HepG2 (cell line): ENCODE measurements at regions of chr3 and their contacts with region 1.

Region 1: GRCh38 chr3:188037216-188037718 is 116.7 kb upstream of the LPP start:
- DNase-seq: peak; percentile 83
- ATAC-seq: peak; percentile 83
- H3K4me3 ChIP-seq: peak overlapping the region in 2 of 3 experiments; percentile 14 to 56; a peak in 1 of 6 replicates
- H3K27ac ChIP-seq: peak overlapping the region; percentile 82
- H3K4me1 ChIP-seq: peaks cover 62% of the 10 kb centered on the region
- H3K27me3 ChIP-seq: no peaks in the 10 kb centered on the region
- CTCF ChIP-seq: peak; percentile 79
- EP300 ChIP-seq: peak in 1 of 2 experiments; percentile 42; a peak in 1 of 4 replicates
- POLR2A ChIP-seq: no peak
- RAD21 ChIP-seq: peak; percentile 80

Region 2: GRCh38 chr3:187738331-187739093 is 298.8 kb before region 1 on chr3:
- CTCF ChIA-PET with region 1: interaction called, 4 read pairs
- POLR2A ChIA-PET with region 1: interaction called, 11 read pairs
- in situ Hi-C with region 1: loop called (anchors 5 kb)
- intact Hi-C with region 1: no loop called
- DNase-seq: peak; percentile 72
- ATAC-seq: peak; percentile 33
- H3K4me3 ChIP-seq: peak overlapping the region; percentile 45 to 99 (median 98)
- H3K27ac ChIP-seq: peak overlapping the region; percentile 100
- H3K4me1 ChIP-seq: peaks cover 57% of the 10 kb centered on the region
- H3K27me3 ChIP-seq: no peaks in the 10 kb centered on the region
- CTCF ChIP-seq: peak; percentile 72
- EP300 ChIP-seq: no peak
- POLR2A ChIP-seq: no peak
- RAD21 ChIP-seq: peak; percentile 70

Region 3: DNA sequence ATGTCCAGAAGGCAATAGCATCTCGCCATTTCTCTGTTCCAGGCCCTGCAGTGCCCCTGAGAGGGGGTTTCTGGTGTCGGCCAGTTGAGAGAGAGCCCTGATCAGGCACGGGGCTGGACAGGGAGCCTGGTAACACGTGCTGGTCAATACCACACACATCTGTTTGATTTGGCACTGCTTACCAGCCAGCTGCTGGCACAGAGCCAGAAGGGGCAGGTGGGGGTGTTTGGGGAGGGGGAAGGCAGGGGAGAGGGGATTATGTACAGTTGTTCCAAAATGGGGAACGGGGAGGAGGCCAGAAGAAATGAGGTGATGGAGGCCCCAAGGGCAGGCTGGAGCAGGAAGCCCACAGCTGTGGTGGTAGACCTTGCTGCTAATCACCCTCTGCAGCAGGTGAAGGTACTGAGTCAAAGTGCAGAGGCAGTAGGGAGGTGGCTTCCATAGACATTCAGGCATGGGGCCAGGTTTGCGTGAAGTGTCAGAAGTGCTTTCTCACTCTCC is 36.9 kb before region 1 on chr3:
- CTCF ChIA-PET with region 1: no interaction called
- POLR2A ChIA-PET with region 1: interaction called, 11 read pairs
- in situ Hi-C with region 1: no loop called
- intact Hi-C with region 1: loop called (anchors 1 kb)
- DNase-seq: no peak
- ATAC-seq: peak; percentile 17
- H3K4me3 ChIP-seq: no peak overlapping the region
- H3K27ac ChIP-seq: peak overlapping the region; percentile 90
- H3K4me1 ChIP-seq: peaks cover 99% of the 10 kb centered on the region
- H3K27me3 ChIP-seq: no peaks in the 10 kb centered on the region
- CTCF ChIP-seq: peak; percentile 32; the same call in 1 of the 2 replicates
- EP300 ChIP-seq: peak in 1 of 2 experiments; percentile 53; a peak in 1 of 4 replicates
- POLR2A ChIP-seq: no peak
- RAD21 ChIP-seq: no peak

Region 4: DNA sequence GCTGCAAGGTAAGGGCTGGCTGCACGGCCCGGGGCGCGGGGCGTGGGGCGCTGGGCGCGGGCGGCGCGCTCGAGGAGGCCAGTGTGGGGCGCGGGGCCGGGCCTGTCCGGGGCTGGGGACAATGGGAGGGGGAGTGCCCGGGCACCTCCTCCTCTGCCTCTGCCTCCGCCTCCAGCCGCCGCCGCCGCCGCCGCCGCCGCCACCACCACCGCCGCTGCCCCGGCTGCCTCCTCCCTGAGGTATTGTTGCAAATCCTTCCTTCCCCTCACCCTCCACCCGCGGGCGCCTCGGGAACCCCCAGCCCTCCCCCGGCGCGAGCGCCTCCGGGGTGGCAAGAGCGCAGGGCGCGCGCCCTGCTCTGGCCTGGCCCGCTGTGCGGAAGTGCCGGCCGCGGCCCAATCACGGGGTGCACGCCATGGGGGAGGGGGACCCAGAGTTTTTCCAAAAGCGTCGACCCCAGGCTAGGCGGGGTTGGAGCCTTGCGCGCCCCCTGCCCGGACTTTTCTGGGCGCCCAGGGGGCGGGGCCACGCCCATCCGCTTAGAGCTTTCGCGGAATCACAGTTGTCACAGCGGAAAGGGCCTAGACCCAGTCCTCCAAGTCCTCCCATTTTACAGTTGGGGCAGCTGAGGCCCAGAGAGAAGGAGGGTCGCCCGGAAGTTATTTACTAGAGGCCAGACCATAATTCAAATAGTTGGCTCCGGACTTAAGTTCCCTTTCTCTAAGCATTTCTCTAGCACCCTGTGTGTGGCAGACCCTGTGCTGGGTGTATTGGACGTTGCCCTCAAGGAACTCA is 116.9 kb after region 1 on chr3 and contains the start of gene LPP:
- CTCF ChIA-PET with region 1: no interaction called
- POLR2A ChIA-PET with region 1: interaction called, 5 read pairs
- in situ Hi-C with region 1: no loop called
- intact Hi-C with region 1: loop called (anchors 5 kb)
- DNase-seq: peak; percentile 47
- ATAC-seq: peak; percentile 88
- H3K4me3 ChIP-seq: peak within 1 kb of the TSS; percentile 83 to 92 (median 88)
- H3K27ac ChIP-seq: peak within 1 kb of the TSS; percentile 73
- H3K4me1 ChIP-seq: peaks cover 64% of the 10 kb centered on the region
- H3K27me3 ChIP-seq: no peaks in the 10 kb centered on the region
- CTCF ChIP-seq: peak; percentile 39
- EP300 ChIP-seq: peak in 1 of 2 experiments; percentile 4; a peak in 1 of 4 replicates
- POLR2A ChIP-seq: no peak; a peak in 1 of 4 replicates
- RAD21 ChIP-seq: peak; percentile 44
- total RNA-seq, gene LPP: 29.9 and 41.6 TPM in 2 replicates

Region 5: GRCh38 chr3:188205992-188206416 is 168.7 kb after region 1 on chr3:
- CTCF ChIA-PET with region 1: no interaction called
- POLR2A ChIA-PET with region 1: interaction called, 3 read pairs
- in situ Hi-C with region 1: no loop called
- intact Hi-C with region 1: loop called (anchors 2 kb)
- DNase-seq: peak; percentile 81
- ATAC-seq: peak; percentile 93
- H3K4me3 ChIP-seq: no peak overlapping the region
- H3K27ac ChIP-seq: peak overlapping the region; percentile 50
- H3K4me1 ChIP-seq: peaks cover 30% of the 10 kb centered on the region
- H3K27me3 ChIP-seq: no peaks in the 10 kb centered on the region
- CTCF ChIP-seq: peak; percentile 66
- EP300 ChIP-seq: peak in 1 of 2 experiments; percentile 62; a peak in 2 of 4 replicates
- POLR2A ChIP-seq: no peak
- RAD21 ChIP-seq: peak; percentile 69

Region 6: GRCh38 chr3:188294823-188295487 is 257.7 kb after region 1 on chr3:
- CTCF ChIA-PET with region 1: no interaction called
- POLR2A ChIA-PET with region 1: interaction called, 7 read pairs
- in situ Hi-C with region 1: no loop called
- intact Hi-C with region 1: loop called (anchors 1 kb)
- DNase-seq: peak; percentile 99
- ATAC-seq: peak; percentile 90
- H3K4me3 ChIP-seq: peak overlapping the region in 1 of 3 experiments; percentile 45; a peak in 2 of 6 replicates
- H3K27ac ChIP-seq: peak overlapping the region; percentile 94
- H3K4me1 ChIP-seq: peaks cover 99% of the 10 kb centered on the region
- H3K27me3 ChIP-seq: no peaks in the 10 kb centered on the region
- CTCF ChIP-seq: no peak
- EP300 ChIP-seq: peak; percentile 90 to 96; a peak in 3 of 4 replicates
- POLR2A ChIP-seq: peak; percentile 48 to 74; a peak in 3 of 4 replicates
- RAD21 ChIP-seq: peak; percentile 37; the same call in 1 of the 2 replicates

Region 7: GRCh38 chr3:188954590-188955208 is 917.4 kb after region 1 on chr3:
- CTCF ChIA-PET with region 1: no interaction called
- POLR2A ChIA-PET with region 1: no interaction called
- in situ Hi-C with region 1: loop called (anchors 10 kb)
- intact Hi-C with region 1: loop called (anchors 5 kb)
- DNase-seq: peak; percentile 68
- ATAC-seq: peak; percentile 92
- H3K4me3 ChIP-seq: no peak overlapping the region
- H3K27ac ChIP-seq: no peak overlapping the region
- H3K4me1 ChIP-seq: peaks cover 32% of the 10 kb centered on the region
- H3K27me3 ChIP-seq: no peaks in the 10 kb centered on the region
- CTCF ChIP-seq: peak; percentile 97
- EP300 ChIP-seq: no peak; a peak in 1 of 4 replicates
- POLR2A ChIP-seq: no peak
- RAD21 ChIP-seq: peak; percentile 94